Sigmoid colon (tissue), 7 donors: ENCODE measurements at regions of chr10 and their contacts with region 1.

Region 1: DNA sequence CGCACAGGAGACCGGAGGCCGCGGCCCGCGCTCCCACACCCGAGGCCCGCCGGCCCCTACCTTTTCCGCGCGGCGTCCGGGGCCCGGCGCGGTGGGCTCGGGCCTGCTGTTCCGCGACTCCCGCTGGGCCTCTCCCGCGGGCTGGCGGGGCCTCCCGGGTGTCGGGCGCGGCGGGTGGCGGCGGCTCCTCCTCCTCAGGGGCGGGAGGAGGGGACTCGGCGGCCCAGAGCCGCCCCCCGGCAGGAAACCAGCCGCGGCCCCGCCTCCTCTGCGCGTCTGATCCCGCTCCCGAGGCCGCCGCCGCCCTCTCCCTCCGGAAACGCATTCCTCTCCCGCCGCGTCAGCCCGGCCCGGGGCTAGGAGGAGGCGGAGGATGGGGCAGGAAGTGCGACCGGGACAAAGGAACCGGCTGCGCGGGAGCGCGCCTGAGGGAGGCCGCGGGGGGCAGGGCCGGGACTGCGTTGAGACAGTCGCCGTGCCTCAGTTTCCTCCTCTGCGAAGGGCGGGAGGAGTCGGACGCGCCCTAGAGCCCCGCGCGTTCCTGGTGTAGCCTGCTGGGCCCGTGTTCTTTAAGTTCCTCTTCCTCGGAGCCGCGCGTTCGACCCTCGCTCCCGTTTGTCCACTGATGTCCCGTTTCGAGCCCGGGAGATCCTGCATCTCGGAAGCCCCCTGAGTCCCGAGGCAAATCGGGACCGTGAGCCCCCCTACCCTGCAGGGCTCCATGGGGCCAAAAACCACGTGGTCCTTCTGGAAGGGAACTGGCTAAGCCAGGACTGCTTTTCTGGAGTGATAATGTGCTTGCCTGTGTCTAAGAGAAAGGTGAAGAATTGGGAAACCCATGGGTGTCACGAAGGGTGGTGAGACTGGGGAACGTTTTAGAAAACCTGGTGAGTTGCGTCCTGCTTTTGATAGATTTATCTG is at the start of gene ITGB1:
- DNase-seq: peak; percentile 99
- H3K4me3 ChIP-seq: peak within 1 kb of the TSS; percentile 63 to 97 (median 86)
- H3K27ac ChIP-seq: peak within 1 kb of the TSS; percentile 94 to 99 (median 98)
- H3K4me1 ChIP-seq: peaks cover 0 to 76% (median 64%) of the 10 kb centered on the region in 4 donors
- H3K27me3 ChIP-seq: no peaks in the 10 kb centered on the region
- CTCF ChIP-seq: no peak
- EP300 ChIP-seq: peak in 2 of 4 donors; percentile 64 to 80
- POLR2A ChIP-seq: peak; percentile 98
- total RNA-seq, gene ITGB1: 588 to 1,360 (median 919) TPM

Region 2: DNA sequence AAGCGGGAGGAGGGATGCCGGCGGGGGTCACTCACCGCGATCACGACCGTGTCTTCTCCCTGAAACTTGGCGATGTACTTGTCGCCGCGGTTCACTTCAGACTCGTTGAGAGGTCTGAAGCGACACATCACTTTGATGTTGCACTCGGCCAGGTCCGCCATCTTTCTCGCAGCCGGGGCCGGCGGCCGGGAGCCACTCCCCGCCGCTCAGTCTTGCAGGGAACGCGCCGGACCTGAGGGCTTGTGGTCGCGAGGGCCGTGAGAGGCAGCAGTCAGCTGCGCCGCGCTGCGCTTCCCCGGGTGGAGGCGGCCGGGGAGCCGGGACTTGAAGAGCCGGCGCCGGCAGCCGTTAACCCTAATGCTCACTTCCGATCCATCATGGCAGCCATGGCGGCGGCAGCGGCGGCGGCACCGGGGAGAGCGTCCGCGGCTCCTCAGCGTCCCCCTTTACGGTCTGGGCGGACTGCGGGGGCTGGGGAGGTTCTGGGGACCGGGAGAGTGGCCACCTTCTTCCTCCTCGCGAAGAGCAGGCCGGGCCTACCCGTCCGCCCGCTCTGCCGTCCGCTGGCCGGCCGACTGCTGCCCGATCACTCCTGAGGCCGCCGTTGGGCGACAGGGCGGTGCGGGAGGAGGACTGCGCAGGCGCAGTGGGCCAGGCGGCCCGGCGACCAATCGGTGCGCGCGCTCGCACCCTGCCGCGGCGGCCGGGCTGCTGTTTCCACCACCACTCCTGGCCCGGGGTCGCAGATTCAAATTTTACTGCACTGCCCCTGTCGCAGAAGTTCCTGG is 902.3 kb before region 1 on chr10 and contains the start of gene KIF5B:
- intact Hi-C with region 1: loop called (anchors 10 kb)
- DNase-seq: peak; percentile 94
- H3K4me3 ChIP-seq: peak within 1 kb of the TSS; percentile 77 to 99 (median 92)
- H3K27ac ChIP-seq: peak within 1 kb of the TSS; percentile 93 to 100 (median 96)
- H3K4me1 ChIP-seq: peaks cover 0 to 41% (median 16%) of the 10 kb centered on the region in 4 donors
- H3K27me3 ChIP-seq: no peaks in the 10 kb centered on the region
- CTCF ChIP-seq: no peak
- EP300 ChIP-seq: no peak
- POLR2A ChIP-seq: peak; percentile 97 to 98
- total RNA-seq, gene KIF5B: 199 to 270 (median 240) TPM

Region 3: DNA sequence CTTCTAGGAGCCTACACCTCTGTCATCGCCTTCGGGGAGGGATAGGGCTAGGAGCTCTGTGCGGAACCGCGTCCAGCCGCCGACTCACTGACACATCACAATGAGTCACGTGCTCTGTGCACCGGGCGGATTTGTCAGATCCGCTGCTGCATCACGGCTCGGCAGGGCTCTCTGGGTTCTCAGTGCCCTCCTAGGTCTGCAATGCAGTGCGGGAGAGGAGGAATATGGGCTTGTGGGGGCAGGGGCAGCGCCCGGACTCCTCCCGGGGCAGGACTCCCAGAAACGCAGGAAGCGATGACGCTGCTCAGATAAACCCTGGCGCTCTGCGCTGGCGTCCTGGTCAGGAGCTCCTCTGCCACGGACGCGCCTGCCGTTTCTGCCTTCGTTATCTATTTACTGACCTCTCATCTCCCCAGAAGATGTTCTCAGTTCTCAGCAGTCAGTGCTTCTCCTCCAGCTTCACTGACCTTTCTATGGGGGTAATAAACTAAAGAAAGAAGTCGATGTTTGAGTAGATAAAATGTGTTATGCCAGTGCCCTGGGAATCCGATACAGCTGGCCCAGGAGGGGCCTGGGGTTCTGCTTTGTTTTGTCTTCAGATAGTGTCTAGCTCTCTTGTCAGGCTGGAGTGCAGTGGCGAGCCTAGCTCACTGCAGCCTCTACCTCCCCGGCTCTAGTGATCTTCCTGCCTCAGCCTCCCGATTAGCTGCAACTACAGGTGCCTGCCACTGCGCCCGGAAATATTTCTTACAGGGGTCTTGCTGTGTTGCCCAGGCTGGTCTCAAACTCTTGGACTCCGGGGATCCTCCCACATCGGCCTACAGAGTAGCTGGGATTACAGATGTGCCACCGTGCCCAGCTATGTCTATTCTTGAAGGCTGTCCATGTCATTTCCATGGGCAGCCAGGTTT is 22.5 kb after region 1 on chr10:
- intact Hi-C with region 1: loop called (anchors 1 kb)
- DNase-seq: peak; percentile 98
- H3K4me3 ChIP-seq: peak overlapping the region; percentile 42 to 53 (median 48)
- H3K27ac ChIP-seq: peak overlapping the region; percentile 91 to 96 (median 92)
- H3K4me1 ChIP-seq: peaks cover 0 to 33% (median 26%) of the 10 kb centered on the region in 4 donors
- H3K27me3 ChIP-seq: no peaks in the 10 kb centered on the region
- CTCF ChIP-seq: peak in 2 of 4 experiments; percentile 15 to 45
- EP300 ChIP-seq: peak in 2 of 4 donors; percentile 8 to 90
- POLR2A ChIP-seq: peak; percentile 91 to 94